ENCODE measurements at regions of chr7 and their contacts with region 1.

Region 1: GRCh38 chr7:132428247-132428919 is 147.9 kb downstream of the PLXNA4 start:
- DNase-seq: no peak
- H3K4me3 ChIP-seq: no peak overlapping the region
- H3K4me3 Mint-ChIP-seq: no peak overlapping the region
- H3K27ac Mint-ChIP-seq: no peak overlapping the region
- H3K4me1 ChIP-seq: no peaks in the 10 kb centered on the region
- H3K4me1 Mint-ChIP-seq: no peaks in the 10 kb centered on the region
- H3K27me3 ChIP-seq: no peaks in the 10 kb centered on the region; the same call in 1 of the 2 replicates
- H3K27me3 Mint-ChIP-seq: peaks cover 3% of the 10 kb centered on the region
- CTCF ChIP-seq: no peak

Region 2: GRCh38 chr7:132488634-132489302 is 60.4 kb after region 1 on chr7:
- CTCF ChIA-PET with region 1: no interaction called
- POLR2A ChIA-PET with region 1: no interaction called
- intact Hi-C with region 1: loop called (anchors 2 kb)
- DNase-seq: no peak
- H3K4me3 ChIP-seq: no peak overlapping the region
- H3K4me3 Mint-ChIP-seq: no peak overlapping the region
- H3K27ac Mint-ChIP-seq: no peak overlapping the region
- H3K4me1 ChIP-seq: no peaks in the 10 kb centered on the region
- H3K4me1 Mint-ChIP-seq: no peaks in the 10 kb centered on the region
- H3K27me3 ChIP-seq: peaks cover 6% of the 10 kb centered on the region
- H3K27me3 Mint-ChIP-seq: peaks cover 43% of the 10 kb centered on the region
- CTCF ChIP-seq: no peak

Region 3: DNA sequence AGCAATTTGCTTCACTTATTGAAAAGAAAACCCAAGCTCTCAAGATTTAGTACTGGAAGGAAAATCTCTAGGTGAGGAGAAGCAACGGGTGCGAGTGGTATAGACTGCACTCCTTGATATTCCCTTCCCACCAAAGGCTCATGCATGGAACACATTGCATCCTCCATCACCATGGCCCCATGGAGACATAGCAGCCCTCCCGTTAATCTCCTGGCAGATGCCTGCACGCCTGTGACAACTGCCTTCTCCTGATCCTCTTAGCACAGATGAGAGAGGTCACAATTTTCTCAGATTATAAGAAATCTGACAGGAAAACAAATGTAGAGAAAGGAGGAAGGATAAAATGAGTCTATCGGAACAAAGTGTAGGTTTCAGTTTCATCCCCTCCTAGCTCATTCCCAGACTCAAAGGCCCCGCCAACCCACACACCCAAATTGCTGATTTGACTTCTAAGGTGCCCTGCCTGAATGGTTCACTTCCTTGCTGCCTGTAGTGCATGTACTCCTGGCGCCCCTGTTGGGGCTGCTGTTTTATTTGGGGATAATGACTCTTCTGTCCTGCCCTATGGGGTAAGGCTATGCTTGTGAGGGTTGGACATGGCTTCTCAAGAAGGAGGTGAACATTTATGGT is 97.8 kb after region 1 on chr7:
- CTCF ChIA-PET with region 1: no interaction called
- POLR2A ChIA-PET with region 1: no interaction called
- intact Hi-C with region 1: no loop called
- DNase-seq: no peak
- H3K4me3 ChIP-seq: no peak overlapping the region
- H3K4me3 Mint-ChIP-seq: no peak overlapping the region
- H3K27ac Mint-ChIP-seq: no peak overlapping the region
- H3K4me1 ChIP-seq: no peaks in the 10 kb centered on the region
- H3K4me1 Mint-ChIP-seq: no peaks in the 10 kb centered on the region
- H3K27me3 ChIP-seq: no peaks in the 10 kb centered on the region; the same call in none of the 2 replicates
- H3K27me3 Mint-ChIP-seq: peaks cover 33% of the 10 kb centered on the region
- CTCF ChIP-seq: no peak

Measured in Caco-2 (cell line).